ENCODE measurements at regions of chr3 and their contacts with region 1.

Region 1: GRCh38 chr3:128464188-128464587 is 2.5 kb downstream of the DNAJB8 start:
- DNase-seq: peak in 2 of 3 donors; percentile 43 to 50
- H3K4me3 ChIP-seq: no peak overlapping the region
- H3K27ac ChIP-seq: no peak overlapping the region
- H3K4me1 ChIP-seq: peaks cover 0 to 3% (median 0%) of the 10 kb centered on the region in 4 experiments
- H3K27me3 ChIP-seq: peaks cover 0 to 2% (median 0%) of the 10 kb centered on the region in 5 experiments

Region 2: GRCh38 chr3:128080320-128081080 is 383.7 kb before region 1 on chr3:
- CTCF ChIA-PET with region 1: no interaction called
- POLR2A ChIA-PET with region 1: no interaction called
- DNase-seq: no peak
- H3K4me3 ChIP-seq: no peak overlapping the region
- H3K27ac ChIP-seq: no peak overlapping the region
- H3K4me1 ChIP-seq: peaks cover 0 to 28% (median 20%) of the 10 kb centered on the region in 4 experiments
- H3K27me3 ChIP-seq: peaks cover 0 to 9% (median 0%) of the 10 kb centered on the region in 5 experiments

Region 3: GRCh38 chr3:128404231-128404630 is 60.0 kb before region 1 on chr3:
- CTCF ChIA-PET with region 1: no interaction called
- POLR2A ChIA-PET with region 1: no interaction called
- DNase-seq: no peak
- H3K4me3 ChIP-seq: no peak overlapping the region
- H3K27ac ChIP-seq: no peak overlapping the region
- H3K4me1 ChIP-seq: no peaks in the 10 kb centered on the region
- H3K27me3 ChIP-seq: no peaks in the 10 kb centered on the region

Region 4: GRCh38 chr3:128476659-128477058 is 12.5 kb after region 1 on chr3:
- CTCF ChIA-PET with region 1: interaction called, 13 read pairs
- POLR2A ChIA-PET with region 1: interaction called, 4 read pairs
- DNase-seq: no peak
- H3K4me3 ChIP-seq: peak overlapping the region in 1 of 7 experiments; percentile 19
- H3K27ac ChIP-seq: no peak overlapping the region
- H3K4me1 ChIP-seq: peaks cover 0 to 37% (median 24%) of the 10 kb centered on the region in 4 experiments
- H3K27me3 ChIP-seq: no peaks in the 10 kb centered on the region

Region 5: GRCh38 chr3:128508852-128509251 is 44.7 kb after region 1 on chr3:
- CTCF ChIA-PET with region 1: no interaction called
- POLR2A ChIA-PET with region 1: no interaction called
- DNase-seq: no peak
- H3K4me3 ChIP-seq: no peak overlapping the region
- H3K27ac ChIP-seq: no peak overlapping the region
- H3K4me1 ChIP-seq: no peaks in the 10 kb centered on the region
- H3K27me3 ChIP-seq: no peaks in the 10 kb centered on the region

Region 6: DNA sequence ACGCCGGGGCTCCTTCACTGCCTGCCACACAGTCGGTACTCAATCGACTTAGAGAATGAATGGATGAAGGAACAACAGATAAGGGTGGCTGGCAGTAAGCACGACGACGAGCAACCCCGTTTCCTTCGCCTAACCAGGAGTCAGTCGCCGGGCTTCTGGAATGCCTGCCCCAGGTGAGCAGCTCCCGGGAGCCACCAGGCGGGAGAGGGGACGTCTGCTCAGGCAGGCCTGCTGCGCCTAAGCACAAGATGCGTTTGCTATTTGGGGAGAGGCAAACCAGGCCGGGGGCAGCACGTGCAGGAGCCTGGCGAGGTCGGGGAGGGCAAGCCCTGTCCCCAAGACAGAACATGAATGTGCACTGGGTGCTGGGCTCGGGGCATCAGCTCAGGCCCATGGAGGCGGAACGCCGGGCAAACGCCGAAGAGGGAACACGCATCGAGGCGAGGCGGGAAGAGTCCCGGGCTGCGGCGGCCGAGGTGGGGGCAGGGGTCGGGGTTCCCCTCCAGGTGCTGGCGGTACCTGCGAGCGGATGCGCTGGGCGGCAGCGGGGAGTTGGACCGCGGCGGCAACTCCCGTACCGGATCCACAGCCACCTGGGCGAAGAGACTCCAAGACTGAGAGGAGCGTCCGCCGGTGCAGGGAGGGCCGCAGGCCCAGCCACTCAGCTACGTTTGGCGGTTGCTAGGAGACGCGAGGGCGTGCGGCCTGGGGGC is 529.4 kb after region 1 on chr3 and contains the start of gene CFAP92:
- CTCF ChIA-PET with region 1: no interaction called
- POLR2A ChIA-PET with region 1: no interaction called
- DNase-seq: peak; percentile 78 to 91 (median 90)
- H3K4me3 ChIP-seq: peak within 1 kb of the TSS in 5 of 7 experiments; percentile 31 to 76 (median 55)
- H3K27ac ChIP-seq: no peak within 1 kb of the TSS
- H3K4me1 ChIP-seq: peaks cover 15 to 54% (median 43%) of the 10 kb centered on the region in 4 experiments
- H3K27me3 ChIP-seq: no peaks in the 10 kb centered on the region